ENCODE measurements at regions of chr4 and their contacts with region 1.

Region 1: DNA sequence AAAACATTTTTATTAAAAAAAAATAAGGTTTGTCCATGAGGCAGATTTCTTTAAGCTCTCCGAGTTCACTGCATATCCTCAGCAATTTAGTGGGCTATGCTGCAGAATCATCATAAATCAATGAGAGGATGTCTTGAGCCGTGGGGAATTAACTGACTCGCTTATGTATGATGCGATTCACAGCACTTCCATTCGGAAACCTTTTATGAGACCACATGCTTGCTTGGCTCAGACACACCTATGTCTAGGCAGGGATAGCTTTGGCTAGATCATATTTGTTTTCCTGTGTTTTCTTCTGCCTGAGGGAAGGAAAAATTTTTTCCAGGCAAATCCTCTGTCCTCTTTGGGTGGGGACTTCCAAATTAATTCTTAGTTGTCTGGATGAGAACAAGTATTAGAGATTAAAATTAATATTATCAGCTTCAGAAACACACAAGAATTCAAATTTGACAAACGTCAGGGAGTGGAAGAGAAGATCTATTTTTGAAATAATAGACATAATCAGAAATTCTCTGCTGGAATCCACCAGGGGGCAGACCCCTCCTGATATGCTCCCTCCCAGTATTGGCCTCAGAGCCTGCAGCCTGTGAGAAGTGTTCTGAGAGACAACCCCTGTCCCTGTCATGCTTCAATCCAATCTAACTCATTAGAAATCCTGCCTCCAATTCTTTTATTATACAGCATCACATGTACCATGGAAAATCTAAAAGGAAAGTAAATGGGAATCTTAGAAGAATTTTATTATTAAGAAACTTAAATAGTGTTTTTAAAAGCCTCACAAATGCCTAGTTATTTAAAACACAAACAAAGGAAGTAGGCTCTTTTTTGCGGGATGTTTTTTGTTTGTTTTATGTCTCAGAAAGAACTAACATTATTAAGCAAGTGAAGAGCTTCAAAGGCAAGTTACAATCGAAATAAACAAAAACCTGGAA is 345.1 kb upstream of the TACR3 start:
- DNase-seq: no peak
- H3K4me3 ChIP-seq: no peak overlapping the region
- H3K27ac ChIP-seq: no peak overlapping the region
- H3K4me1 ChIP-seq: no peaks in the 10 kb centered on the region
- H3K27me3 ChIP-seq: no peaks in the 10 kb centered on the region
- CTCF ChIP-seq: peak; percentile 47 to 63 (median 59)
- EP300 ChIP-seq: no peak
- POLR2A ChIP-seq: no peak

Region 2: DNA sequence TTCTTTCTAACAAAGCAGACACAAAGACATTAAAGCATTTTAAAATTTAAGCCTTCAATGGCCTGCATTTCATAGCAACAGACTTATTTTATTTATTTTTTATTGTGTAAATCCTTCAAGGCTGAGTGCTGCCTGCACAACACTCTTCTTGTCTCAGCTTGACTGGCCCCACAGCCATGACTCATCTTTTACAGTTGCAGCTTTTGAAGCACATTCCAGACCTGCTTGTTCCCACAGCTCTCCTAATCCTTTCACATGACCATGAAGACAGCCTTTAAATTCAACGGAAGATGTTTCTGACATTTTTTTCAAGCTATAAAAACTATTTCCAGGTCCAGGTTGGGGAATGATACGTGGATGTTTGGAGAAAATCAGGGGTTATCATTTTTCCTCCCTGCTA is 68.3 kb before region 1 on chr4:
- intact Hi-C with region 1: no loop called
- DNase-seq: no peak
- H3K4me3 ChIP-seq: no peak overlapping the region
- H3K27ac ChIP-seq: no peak overlapping the region
- H3K4me1 ChIP-seq: peaks cover 0 to 6% (median 4%) of the 10 kb centered on the region in 4 donors
- H3K27me3 ChIP-seq: no peaks in the 10 kb centered on the region
- CTCF ChIP-seq: no peak
- EP300 ChIP-seq: no peak
- POLR2A ChIP-seq: no peak

Region 3: DNA sequence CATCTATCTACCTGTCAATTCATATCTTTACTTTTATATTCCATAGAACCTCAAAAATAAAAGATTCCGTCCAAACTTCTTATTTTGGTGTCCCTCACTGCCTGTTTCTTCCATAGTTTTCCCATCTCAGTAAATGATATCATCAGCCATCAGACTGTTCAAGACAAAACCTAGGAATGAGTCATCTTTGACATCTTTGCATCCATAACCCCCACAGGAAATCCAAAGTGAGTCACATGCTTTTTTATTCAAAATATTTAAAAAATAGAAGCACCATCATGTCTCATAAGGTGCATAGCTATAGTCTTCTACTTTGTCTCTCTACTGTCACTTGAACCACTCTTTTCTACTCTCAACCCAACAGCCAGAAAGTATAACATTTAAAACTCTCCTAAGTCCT is 459.7 kb after region 1 on chr4:
- intact Hi-C with region 1: loop called (anchors 10 kb)
- DNase-seq: no peak
- H3K4me3 ChIP-seq: no peak overlapping the region
- H3K27ac ChIP-seq: no peak overlapping the region
- H3K4me1 ChIP-seq: no peaks in the 10 kb centered on the region
- H3K27me3 ChIP-seq: no peaks in the 10 kb centered on the region
- CTCF ChIP-seq: no peak
- EP300 ChIP-seq: no peak
- POLR2A ChIP-seq: no peak

Region 4: GRCh38 chr4:104860238-104861123 is 795.6 kb after region 1 on chr4:
- intact Hi-C with region 1: loop called (anchors 5 kb)
- DNase-seq: no peak
- H3K4me3 ChIP-seq: peak overlapping the region in 1 of 4 donors; percentile 13
- H3K27ac ChIP-seq: no peak overlapping the region
- H3K4me1 ChIP-seq: peaks cover 3 to 18% (median 15%) of the 10 kb centered on the region in 4 donors
- H3K27me3 ChIP-seq: no peaks in the 10 kb centered on the region
- CTCF ChIP-seq: peak; percentile 88 to 93 (median 89)
- EP300 ChIP-seq: no peak
- POLR2A ChIP-seq: no peak

Measured in esophagus muscularis mucosa (tissue), 4 donors.